PC-3 (cell line): ENCODE measurements at regions of chr12 and their contacts with region 1.

Region 1: DNA sequence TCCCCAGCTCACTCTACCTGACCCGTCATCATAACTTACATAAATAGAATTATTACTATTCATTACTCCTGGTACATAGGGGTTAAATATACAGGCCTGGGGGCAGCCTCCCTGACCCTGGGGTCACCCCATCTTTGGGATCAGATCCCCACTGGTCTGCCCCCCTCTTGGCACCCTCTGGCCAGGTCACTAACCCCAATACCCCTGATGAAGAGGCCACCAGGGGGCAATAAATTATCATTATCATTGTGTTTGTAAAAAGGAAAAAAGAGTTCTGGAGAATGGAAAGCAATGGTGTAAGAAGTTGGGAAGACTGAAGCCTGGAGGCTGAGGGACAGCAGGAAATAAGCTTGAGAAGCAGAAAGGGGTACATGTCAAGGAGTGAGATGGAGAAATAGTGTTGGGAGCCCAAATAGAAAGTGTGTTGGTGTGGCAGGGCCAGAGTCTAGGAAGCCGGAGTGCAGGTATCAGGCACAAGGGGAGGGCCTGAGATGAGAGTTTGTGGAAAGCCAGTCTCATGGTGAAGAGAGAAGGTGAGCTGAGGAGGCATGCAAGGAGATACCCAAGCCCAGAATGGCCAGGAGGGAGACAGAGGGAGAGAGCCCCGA is 6.1 kb upstream of the AAAS start:
- DNase-seq: peak; percentile 40
- ATAC-seq: no peak
- H3K4me3 ChIP-seq: no peak overlapping the region
- H3K27ac ChIP-seq: no peak overlapping the region
- H3K4me1 ChIP-seq: peaks cover 7% of the 10 kb centered on the region
- H3K27me3 ChIP-seq: no peaks in the 10 kb centered on the region
- CTCF ChIP-seq: peak; percentile 68

Region 2: DNA sequence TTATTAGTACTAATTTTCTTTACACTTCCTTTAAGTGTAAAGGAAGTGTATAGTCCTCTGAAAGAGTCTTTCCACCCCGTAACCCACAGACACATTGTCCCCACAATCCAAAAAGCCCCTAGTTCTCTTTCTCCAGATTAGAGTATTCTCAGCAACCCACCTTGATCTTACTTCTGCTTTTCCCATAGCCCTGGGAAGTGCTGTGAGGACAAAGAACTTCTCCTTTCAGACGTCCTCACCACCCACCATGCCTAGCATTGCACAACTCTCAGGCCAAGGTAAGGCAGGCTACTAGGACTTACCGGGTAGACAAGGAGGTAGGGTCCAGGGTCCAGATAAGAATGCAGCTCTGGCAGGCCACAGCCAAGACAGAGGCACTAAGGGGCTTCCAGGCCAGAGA is 13.5 kb before region 1 on chr12:
- CTCF ChIA-PET with region 1: no interaction called
- POLR2A ChIA-PET with region 1: no interaction called
- intact Hi-C with region 1: no loop called
- DNase-seq: no peak
- ATAC-seq: no peak
- H3K4me3 ChIP-seq: no peak overlapping the region
- H3K27ac ChIP-seq: no peak overlapping the region
- H3K4me1 ChIP-seq: no peaks in the 10 kb centered on the region
- H3K27me3 ChIP-seq: no peaks in the 10 kb centered on the region
- CTCF ChIP-seq: no peak

Region 3: GRCh38 chr12:53344824-53345485 is 17.4 kb after region 1 on chr12:
- CTCF ChIA-PET with region 1: interaction called, 17 read pairs
- POLR2A ChIA-PET with region 1: interaction called, 8 read pairs
- intact Hi-C with region 1: loop called (anchors 1 kb)
- DNase-seq: peak; percentile 59
- ATAC-seq: peak; percentile 85
- H3K4me3 ChIP-seq: peak overlapping the region; percentile 76
- H3K27ac ChIP-seq: no peak overlapping the region
- H3K4me1 ChIP-seq: peaks cover 3% of the 10 kb centered on the region; the same call in 1 of the 2 replicates
- H3K27me3 ChIP-seq: no peaks in the 10 kb centered on the region
- CTCF ChIP-seq: peak; percentile 79